ENCODE measurements at regions of chr5 and their contacts with region 1.

Region 1: GRCh38 chr5:72892846-72893245 is 63.0 kb upstream of the FCHO2 start:
- DNase-seq: no peak
- H3K4me3 ChIP-seq: no peak overlapping the region
- H3K27ac ChIP-seq: no peak overlapping the region
- H3K4me1 ChIP-seq: no peaks in the 10 kb centered on the region
- H3K27me3 ChIP-seq: no peaks in the 10 kb centered on the region
- CTCF ChIP-seq: no peak
- POLR2A ChIP-seq: no peak

Region 2: GRCh38 chr5:71703941-71704340 is 1188.9 kb before region 1 on chr5:
- intact Hi-C with region 1: loop called (anchors 5 kb)
- DNase-seq: no peak
- H3K4me3 ChIP-seq: no peak overlapping the region
- H3K27ac ChIP-seq: no peak overlapping the region
- H3K4me1 ChIP-seq: no peaks in the 10 kb centered on the region
- H3K27me3 ChIP-seq: no peaks in the 10 kb centered on the region
- CTCF ChIP-seq: no peak
- POLR2A ChIP-seq: no peak

Measured in breast epithelium (tissue), 4 donors.